Gastrocnemius medialis (tissue), 4 donors: ENCODE measurements at regions of chr12 and their contacts with region 1.

Region 1: DNA sequence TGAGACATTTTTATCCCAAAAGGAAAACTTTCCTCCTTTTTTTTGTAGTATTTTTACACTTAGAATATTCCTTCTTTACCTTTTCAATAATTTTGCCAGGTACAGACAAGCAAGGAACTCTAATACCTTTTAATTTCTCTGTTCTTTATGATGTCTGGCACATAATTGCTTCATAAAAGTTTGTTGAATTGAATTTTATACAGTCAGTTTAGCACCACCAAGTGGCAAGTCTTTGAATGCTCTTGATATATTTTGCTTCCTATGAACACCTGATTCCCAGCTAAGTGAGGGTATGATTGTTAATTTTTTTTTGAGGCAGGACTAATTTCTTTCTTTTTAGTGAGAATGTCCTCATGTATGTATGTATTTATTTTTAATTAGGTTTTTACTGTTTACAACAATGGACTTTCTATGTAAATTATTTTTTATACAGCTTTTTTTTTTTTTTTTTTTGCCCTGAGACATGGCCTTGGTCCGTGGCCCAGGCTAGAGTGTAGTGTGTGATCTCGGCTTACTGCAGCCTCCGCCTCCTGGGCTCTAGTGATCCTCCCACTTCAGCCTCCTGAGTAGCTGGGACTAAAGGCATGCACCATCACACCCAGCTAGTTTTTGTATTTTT is 6.9 kb downstream of the TBC1D15 start:
- DNase-seq: no peak
- ATAC-seq: no peak
- H3K4me3 ChIP-seq: peak overlapping the region in 1 of 4 donors; percentile 5
- H3K27ac ChIP-seq: peak overlapping the region; percentile 84 to 95 (median 90)
- H3K4me1 ChIP-seq: peaks cover 86 to 94% of the 10 kb centered on the region in 2 donors
- H3K27me3 ChIP-seq: no peaks in the 10 kb centered on the region
- CTCF ChIP-seq: peak; percentile 11 to 78 (median 53)
- POLR2A ChIP-seq: no peak

Region 2: DNA sequence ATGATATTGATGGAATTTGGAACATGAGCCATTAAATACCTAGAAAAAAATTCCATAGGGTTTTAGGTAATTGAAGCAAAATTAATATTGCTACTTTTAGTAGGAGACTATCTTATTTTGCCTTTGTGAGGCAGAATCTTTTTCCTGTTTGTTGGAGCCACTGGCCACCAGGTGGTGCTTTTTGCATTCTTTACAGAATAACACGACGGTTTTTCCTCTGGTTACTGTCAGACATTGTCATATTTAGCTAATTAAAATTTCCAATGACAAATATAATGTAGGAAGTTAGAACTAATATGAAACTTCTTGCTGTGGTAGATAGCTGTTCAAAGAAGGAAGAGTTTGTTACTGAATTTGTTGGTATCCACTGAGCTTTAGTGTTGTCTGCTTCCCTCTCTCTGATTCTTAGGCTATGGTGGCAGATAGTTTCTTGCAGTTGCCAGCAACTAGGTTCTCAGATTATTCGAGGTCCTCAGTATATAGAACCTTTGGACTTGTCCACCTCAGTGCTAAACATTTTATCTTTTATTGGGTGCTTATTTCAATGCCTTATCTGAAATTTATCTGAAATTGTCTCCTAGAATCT is 66.1 kb before region 1 on chr12:
- in situ Hi-C with region 1: loop called in 1 of 4 experiments (anchors 10 kb)
- intact Hi-C with region 1: loop called (anchors 2 kb)
- DNase-seq: no peak
- ATAC-seq: peak in 1 of 2 donors; percentile 30
- H3K4me3 ChIP-seq: no peak overlapping the region
- H3K27ac ChIP-seq: peak overlapping the region in 2 of 4 donors; percentile 13 to 32
- H3K4me1 ChIP-seq: peaks cover 0 to 7% of the 10 kb centered on the region in 2 donors
- H3K27me3 ChIP-seq: no peaks in the 10 kb centered on the region
- CTCF ChIP-seq: peak; percentile 40 to 69 (median 55)
- POLR2A ChIP-seq: no peak